SK-N-SH (cell line): ENCODE measurements at regions of chr17 and their contacts with region 1.

Region 1: DNA sequence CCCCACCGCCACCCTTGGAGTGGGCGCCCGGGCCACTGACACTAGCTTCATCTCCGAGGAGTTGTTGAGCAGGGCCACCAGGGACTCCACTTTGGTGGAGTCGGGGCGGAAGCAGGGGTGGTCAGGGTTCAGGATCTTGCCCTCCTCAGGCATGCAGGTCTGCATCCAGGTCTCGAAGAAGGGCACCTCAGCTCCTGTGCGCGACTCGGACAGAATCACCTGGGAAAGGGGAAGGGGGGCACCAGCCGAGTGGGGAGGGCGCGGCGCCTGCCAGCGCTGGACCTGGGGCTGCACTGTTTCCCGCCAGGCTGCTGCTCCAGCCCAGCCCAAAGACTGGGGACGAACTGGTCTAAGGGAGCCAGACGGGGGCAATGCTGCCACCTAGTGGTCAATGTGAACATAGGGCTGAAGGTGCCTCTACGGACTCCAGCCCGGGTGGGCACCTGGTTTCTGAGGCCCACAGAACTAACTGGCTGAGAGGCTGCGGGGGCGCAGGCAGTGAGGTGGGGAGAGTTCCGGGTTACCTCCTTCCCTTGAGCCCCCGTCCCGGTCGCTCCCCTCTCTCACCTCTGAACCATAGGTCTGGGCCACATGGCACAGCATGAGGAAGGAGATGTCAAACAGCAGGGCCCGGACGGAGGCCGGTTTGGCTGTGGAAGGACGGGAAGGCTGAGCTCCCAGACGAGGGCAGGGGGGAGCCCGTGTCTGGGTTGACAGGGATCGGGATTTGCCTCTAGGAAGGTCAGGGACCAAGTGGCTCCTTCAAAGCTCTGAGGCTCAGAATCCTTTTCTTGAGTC is 11.8 kb downstream of the CSF3 start:
- DNase-seq: peak; percentile 93
- H3K4me3 ChIP-seq: no peak overlapping the region
- H3K27ac ChIP-seq: no peak overlapping the region
- H3K4me1 ChIP-seq: no peaks in the 10 kb centered on the region; a peak in 1 of 4 replicates
- H3K27me3 ChIP-seq: no peaks in the 10 kb centered on the region
- CTCF ChIP-seq: peak; percentile 89
- EP300 ChIP-seq: no peak
- RAD21 ChIP-seq: peak; percentile 62

Region 2: DNA sequence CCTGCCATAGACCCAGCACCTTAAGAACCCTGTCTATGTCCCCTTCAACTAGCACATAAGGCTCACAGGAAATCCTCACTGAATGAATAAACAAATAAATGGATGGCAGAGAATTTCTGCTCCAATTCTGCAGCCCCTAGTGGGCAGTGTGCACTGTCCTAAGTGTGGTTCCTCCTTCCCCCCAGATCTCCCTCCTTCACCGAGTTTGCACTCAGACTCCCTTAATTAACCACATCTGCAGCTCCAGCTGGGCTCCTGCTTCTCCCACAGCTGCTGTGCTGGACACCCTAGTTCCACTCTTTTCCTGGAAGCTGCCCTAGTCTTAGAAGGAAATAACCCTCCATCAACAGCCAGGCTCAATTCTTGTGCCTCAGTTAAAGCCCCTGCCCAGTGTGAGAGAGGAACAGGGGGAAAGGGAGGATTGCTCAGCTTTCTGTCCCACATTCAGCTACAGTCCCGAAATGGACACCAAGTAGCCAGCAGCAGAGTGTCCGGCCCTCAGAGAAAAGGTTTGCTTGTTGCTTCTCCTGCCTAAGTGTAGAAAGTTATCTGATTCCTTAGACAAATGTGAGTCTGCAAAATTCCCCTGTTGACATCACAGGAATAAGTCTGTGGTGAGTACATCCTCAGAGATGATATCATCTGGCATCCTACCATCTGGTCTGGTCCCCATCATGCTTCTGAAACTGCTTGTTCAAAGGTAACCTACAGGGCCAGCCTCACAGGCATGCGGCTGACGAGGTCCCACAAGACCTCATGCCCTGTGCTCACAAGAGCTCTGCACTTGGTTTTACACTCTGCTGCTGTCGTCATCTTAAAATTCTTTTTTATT is 87.2 kb before region 1 on chr17:
- CTCF ChIA-PET with region 1: no interaction called
- POLR2A ChIA-PET with region 1: no interaction called
- DNase-seq: peak; percentile 84
- H3K4me3 ChIP-seq: peak overlapping the region in 1 of 2 experiments; percentile 40; a peak in 2 of 4 replicates
- H3K27ac ChIP-seq: peak overlapping the region; percentile 65 to 93
- H3K4me1 ChIP-seq: peaks cover 9 to 14% of the 10 kb centered on the region in 2 experiments; a peak in 2 of 4 replicates
- H3K27me3 ChIP-seq: no peaks in the 10 kb centered on the region
- CTCF ChIP-seq: peak; percentile 68
- EP300 ChIP-seq: 0 out of 4 replicates have a peak, but pooled peaks of 1 of the 2 experiments have one; percentile 46
- RAD21 ChIP-seq: peak; percentile 65

Region 3: GRCh38 chr17:40038882-40039513 is 12.0 kb after region 1 on chr17:
- CTCF ChIA-PET with region 1: interaction called, 96 read pairs
- POLR2A ChIA-PET with region 1: no interaction called
- DNase-seq: peak; percentile 80
- H3K4me3 ChIP-seq: no peak overlapping the region
- H3K27ac ChIP-seq: peak overlapping the region; percentile 34 to 64
- H3K4me1 ChIP-seq: peaks cover 0 to 6% of the 10 kb centered on the region in 2 experiments; a peak in 1 of 4 replicates
- H3K27me3 ChIP-seq: no peaks in the 10 kb centered on the region
- CTCF ChIP-seq: peak; percentile 83
- EP300 ChIP-seq: no peak
- RAD21 ChIP-seq: peak; percentile 64

Region 4: DNA sequence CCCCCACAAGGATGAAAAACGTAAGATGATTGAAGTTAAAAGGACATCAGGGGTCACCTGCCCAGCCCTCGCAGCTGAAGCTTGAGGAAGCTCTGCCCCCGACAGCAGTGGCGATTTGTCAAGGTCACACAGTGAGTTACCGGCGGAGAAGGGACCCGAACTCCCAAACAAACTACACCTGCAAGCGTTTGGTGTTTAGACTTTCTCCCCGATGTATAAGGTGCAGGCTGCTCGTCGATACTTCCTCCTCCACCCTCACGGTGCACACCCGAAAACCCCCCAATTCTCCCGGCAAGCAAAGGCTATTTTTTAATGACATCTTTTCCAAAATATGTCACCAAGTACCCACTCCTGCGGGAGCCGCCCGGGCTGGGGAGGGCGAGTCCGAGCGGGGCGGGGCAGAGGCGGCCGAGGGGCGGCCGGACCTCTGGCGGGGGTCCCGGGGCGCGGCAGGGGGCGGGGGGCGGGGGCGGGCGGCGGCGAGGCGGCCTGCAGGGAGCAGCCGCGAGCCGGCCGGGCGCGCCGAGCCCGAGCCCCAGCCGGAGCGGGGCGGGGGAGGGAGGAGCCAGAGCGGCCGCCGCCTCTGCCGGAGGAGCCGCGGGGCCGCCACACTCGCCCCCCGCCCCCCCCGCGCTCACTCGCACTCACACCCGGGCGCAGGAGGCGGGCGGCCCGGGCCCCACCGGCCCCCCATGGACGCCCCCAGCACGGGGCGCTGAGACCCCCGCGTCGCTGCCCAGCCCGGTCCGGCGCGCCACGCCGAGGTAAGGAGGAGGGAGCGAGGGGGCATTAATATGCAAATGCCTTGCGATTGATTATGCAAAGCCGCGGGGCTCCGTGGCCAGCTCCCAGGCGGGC is 35.5 kb after region 1 on chr17 and contains the start of gene THRA:
- CTCF ChIA-PET with region 1: interaction called, 13 read pairs
- POLR2A ChIA-PET with region 1: no interaction called
- DNase-seq: peak; percentile 95
- H3K4me3 ChIP-seq: peak within 1 kb of the TSS; percentile 77 to 94
- H3K27ac ChIP-seq: peak within 1 kb of the TSS in 1 of 2 experiments; percentile 81; a peak in 2 of 4 replicates
- H3K4me1 ChIP-seq: peaks cover 13 to 32% of the 10 kb centered on the region in 2 experiments; a peak in 3 of 4 replicates
- H3K27me3 ChIP-seq: no peaks in the 10 kb centered on the region
- CTCF ChIP-seq: no peak
- EP300 ChIP-seq: no peak
- RAD21 ChIP-seq: peak; percentile 38; the same call in 1 of the 2 replicates
- polyA plus RNA-seq, gene THRA: 20.1 and 23.1 TPM in 2 replicates

Region 5: GRCh38 chr17:40092581-40092980 is 65.6 kb after region 1 on chr17:
- CTCF ChIA-PET with region 1: interaction called, 11 read pairs
- POLR2A ChIA-PET with region 1: no interaction called
- DNase-seq: no peak
- H3K4me3 ChIP-seq: no peak overlapping the region
- H3K27ac ChIP-seq: no peak overlapping the region
- H3K4me1 ChIP-seq: no peaks in the 10 kb centered on the region; a peak in 1 of 4 replicates
- H3K27me3 ChIP-seq: no peaks in the 10 kb centered on the region
- CTCF ChIP-seq: no peak
- EP300 ChIP-seq: no peak
- RAD21 ChIP-seq: no peak